ENCODE measurements at regions of chr5 and their contacts with region 1.

Region 1: DNA sequence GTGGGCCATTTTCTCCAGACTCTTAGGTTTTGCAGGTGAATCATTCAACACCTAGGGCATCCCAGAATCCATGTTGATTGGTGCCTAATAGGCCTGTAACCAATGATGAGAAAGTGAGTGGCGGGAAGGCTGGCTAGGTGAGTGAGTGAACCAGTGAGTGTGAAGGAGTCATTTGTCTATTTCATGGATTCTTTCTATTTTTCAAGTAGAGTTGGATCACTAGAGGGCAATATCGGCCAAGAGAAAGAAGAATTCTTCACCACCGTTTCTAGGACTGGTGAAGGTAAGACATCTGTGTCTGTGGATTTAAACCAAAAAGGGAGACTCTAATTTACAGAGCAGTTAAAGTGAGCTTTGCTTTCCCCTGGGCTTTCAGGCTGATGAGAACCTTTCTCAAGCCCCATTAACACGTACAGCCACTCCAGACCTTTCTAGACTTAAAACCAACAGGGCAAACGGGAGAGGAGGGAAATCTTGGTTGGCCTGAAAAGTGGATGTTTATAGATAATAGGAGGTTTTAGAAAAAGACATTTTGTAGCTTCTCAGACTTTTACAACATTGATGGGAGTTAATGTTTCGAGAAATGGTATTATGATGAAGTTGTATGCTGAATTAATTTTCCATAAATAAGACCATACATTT is 114.3 kb upstream of the IL12B start:
- DNase-seq: no peak
- ATAC-seq: no peak
- H3K4me3 ChIP-seq: no peak overlapping the region
- H3K27ac ChIP-seq: no peak overlapping the region
- H3K4me1 ChIP-seq: no peaks in the 10 kb centered on the region
- H3K27me3 ChIP-seq: no peaks in the 10 kb centered on the region

Region 2: GRCh38 chr5:158852622-158853021 is 591.9 kb before region 1 on chr5:
- intact Hi-C with region 1: no loop called
- DNase-seq: no peak
- ATAC-seq: no peak
- H3K4me3 ChIP-seq: no peak overlapping the region
- H3K27ac ChIP-seq: no peak overlapping the region
- H3K4me1 ChIP-seq: no peaks in the 10 kb centered on the region
- H3K27me3 ChIP-seq: no peaks in the 10 kb centered on the region

Region 3: DNA sequence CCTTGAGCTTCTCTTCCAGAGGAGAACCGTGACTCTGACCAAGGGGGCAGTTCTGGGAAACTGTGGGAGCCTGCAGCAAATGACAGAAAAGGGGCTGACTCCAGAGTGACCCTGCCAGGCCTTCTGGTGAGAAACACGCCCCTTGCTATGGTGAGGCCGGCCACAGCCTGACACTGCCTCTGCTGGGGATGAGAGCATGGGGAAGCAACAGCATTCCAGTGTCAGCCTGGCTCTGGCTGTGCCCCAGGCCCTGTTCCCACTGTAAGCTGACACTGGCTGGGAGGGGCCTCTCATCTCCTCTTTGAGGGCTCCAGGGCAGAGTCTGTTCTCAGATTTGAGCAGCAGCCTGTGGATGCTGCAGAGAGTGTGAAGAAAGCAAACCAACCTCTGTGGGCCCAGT is 65.7 kb after region 1 on chr5:
- intact Hi-C with region 1: loop called in 1 of 4 experiments (anchors 5 kb)
- DNase-seq: peak; percentile 69 to 92 (median 90)
- ATAC-seq: peak; percentile 95 to 96
- H3K4me3 ChIP-seq: no peak overlapping the region
- H3K27ac ChIP-seq: peak overlapping the region; percentile 97
- H3K4me1 ChIP-seq: peaks cover 5% of the 10 kb centered on the region
- H3K27me3 ChIP-seq: no peaks in the 10 kb centered on the region

Region 4: GRCh38 chr5:159915904-159916840 is 471.6 kb after region 1 on chr5 and contains the start of gene ADRA1B:
- intact Hi-C with region 1: loop called in 1 of 4 experiments (anchors 10 kb)
- DNase-seq: peak; percentile 76 to 90 (median 90)
- ATAC-seq: peak; percentile 90 to 92
- H3K4me3 ChIP-seq: peak within 1 kb of the TSS; percentile 69
- H3K27ac ChIP-seq: no peak within 1 kb of the TSS
- H3K4me1 ChIP-seq: no peaks in the 10 kb centered on the region
- H3K27me3 ChIP-seq: no peaks in the 10 kb centered on the region
- total RNA-seq, gene ADRA1B: 2.0 to 3.6 (median 2.5) TPM

Region 5: DNA sequence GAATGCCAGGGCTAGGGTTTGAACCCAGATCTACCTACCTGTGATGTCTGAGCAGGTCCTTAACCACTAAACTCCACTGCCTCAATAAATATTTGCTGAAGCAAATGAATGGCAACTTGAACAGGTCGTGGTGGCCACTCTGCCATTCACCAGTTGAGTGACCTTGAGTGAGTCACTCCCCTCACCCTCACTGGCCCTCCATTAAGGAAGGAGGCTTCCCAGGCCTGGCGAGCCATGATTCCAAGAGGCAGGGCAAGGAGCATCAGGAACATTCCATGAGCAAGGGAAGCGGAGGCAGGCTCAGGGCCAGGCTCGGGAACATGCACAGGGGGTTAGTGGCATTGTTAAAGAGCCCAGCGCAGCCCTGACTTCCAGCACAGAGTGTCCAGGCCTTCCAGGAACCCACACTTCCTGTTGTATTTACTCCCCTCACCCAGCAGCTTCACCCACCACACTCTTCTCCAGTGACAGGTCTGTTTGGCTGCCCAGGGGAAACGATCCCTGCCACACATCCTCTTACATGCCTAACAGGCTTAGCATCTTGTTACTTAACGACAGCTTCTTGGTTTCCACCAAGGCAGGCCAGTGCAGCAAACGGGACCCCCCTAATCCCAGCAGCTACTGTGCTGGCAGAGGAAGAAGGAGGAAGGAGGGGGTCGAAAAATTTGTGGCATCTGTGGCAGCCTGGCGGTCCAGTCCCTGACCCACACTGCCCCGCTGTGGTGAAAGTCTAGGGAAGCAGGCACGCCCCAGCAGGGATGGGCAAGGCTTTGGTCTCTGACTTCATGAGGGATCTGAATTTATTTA is 520.7 kb after region 1 on chr5:
- intact Hi-C with region 1: loop called in 2 of 4 experiments (anchors 10 kb)
- DNase-seq: peak; percentile 67 to 87 (median 81)
- ATAC-seq: peak; percentile 79 to 81
- H3K4me3 ChIP-seq: no peak overlapping the region
- H3K27ac ChIP-seq: no peak overlapping the region
- H3K4me1 ChIP-seq: no peaks in the 10 kb centered on the region
- H3K27me3 ChIP-seq: no peaks in the 10 kb centered on the region

Region 6: DNA sequence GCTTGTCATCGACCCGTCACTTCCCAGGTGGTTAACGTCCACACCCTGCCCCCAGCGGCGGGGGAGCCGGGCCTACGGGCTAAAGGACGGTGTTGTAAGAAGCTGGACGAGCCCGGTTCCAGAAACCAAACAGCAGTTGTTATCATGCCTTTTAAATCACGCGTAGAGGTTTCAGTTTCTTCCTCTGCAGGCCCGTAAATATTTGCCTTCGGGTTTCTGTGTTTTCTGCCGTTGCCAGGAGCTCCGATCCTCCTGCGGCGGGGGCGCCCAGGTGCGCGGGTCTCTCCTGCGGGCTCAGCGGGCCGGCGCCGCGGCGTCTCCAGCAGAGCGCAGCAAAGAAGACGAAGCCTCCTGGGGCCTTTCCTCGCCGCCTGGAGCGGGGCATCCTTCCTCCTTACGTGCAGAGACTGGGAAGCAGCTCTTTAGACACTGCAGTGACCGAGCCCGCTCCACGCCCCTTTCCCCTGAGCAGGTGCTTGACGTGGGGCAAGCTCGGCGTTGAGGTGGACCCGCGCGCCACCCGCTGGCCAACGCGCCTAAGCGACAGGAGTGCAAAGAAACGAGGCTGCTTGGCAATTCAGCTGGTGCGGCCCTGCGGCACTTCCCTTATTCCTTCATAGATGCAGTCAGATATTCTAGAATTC is 542.6 kb after region 1 on chr5:
- intact Hi-C with region 1: loop called in 2 of 4 experiments (anchors 5 to 10 kb)
- DNase-seq: peak; percentile 71 to 90 (median 89)
- ATAC-seq: peak; percentile 91
- H3K4me3 ChIP-seq: peak overlapping the region; percentile 44
- H3K27ac ChIP-seq: no peak overlapping the region
- H3K4me1 ChIP-seq: no peaks in the 10 kb centered on the region
- H3K27me3 ChIP-seq: no peaks in the 10 kb centered on the region